ENCODE measurements at regions of chr2 and their contacts with region 1.

Region 1: GRCh38 chr2:37189452-37190153 is 1.1 kb upstream of the SULT6B1 start:
- DNase-seq: peak in 1 of 2 experiments; percentile 69
- H3K4me3 ChIP-seq: no peak overlapping the region
- H3K27ac ChIP-seq: no peak overlapping the region
- H3K4me1 ChIP-seq: peaks cover 14 to 25% (median 16%) of the 10 kb centered on the region in 4 experiments
- H3K27me3 ChIP-seq: no peaks in the 10 kb centered on the region
- CTCF ChIP-seq: peak in 1 of 3 experiments; percentile 13; a peak in 1 of 4 replicates
- EP300 ChIP-seq: no peak
- POLR2A ChIP-seq: no peak
- RAD21 ChIP-seq: no peak

Region 2: GRCh38 chr2:36650031-36650430 is 539.6 kb before region 1 on chr2:
- CTCF ChIA-PET with region 1: no interaction called
- POLR2A ChIA-PET with region 1: no interaction called
- DNase-seq: no peak
- H3K4me3 ChIP-seq: no peak overlapping the region
- H3K27ac ChIP-seq: no peak overlapping the region
- H3K4me1 ChIP-seq: no peaks in the 10 kb centered on the region
- H3K27me3 ChIP-seq: no peaks in the 10 kb centered on the region
- CTCF ChIP-seq: no peak
- EP300 ChIP-seq: no peak
- POLR2A ChIP-seq: no peak
- RAD21 ChIP-seq: no peak

Region 3: DNA sequence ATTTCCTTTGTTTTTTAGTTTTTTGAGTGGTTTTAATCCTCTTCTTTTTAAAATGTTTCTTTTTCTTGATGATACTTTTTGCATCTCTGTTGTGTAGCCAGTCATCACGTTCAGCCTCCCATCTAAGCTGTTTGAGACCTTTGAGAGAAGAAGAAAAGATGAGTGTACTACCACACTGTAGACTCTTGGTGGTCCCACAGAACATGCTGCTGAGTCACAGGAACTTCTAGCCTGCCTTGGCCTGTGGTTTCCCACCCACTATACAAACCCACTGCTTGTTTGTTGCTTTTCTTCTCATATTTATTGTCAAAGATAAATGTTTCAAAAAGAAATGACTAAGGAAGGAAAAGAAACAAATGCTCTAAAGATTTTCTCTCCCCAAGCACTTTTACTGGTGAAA is 12.2 kb after region 1 on chr2:
- CTCF ChIA-PET with region 1: interaction called, 12 read pairs
- POLR2A ChIA-PET with region 1: interaction called, 26 read pairs
- DNase-seq: no peak
- H3K4me3 ChIP-seq: no peak overlapping the region
- H3K27ac ChIP-seq: peak overlapping the region; percentile 52; the same call in 1 of the 2 replicates
- H3K4me1 ChIP-seq: peaks cover 0 to 17% (median 5%) of the 10 kb centered on the region in 4 experiments; a peak in 4 of 7 replicates
- H3K27me3 ChIP-seq: no peaks in the 10 kb centered on the region
- CTCF ChIP-seq: no peak
- EP300 ChIP-seq: no peak
- POLR2A ChIP-seq: no peak
- RAD21 ChIP-seq: no peak; a peak in 1 of 4 replicates

Region 4: DNA sequence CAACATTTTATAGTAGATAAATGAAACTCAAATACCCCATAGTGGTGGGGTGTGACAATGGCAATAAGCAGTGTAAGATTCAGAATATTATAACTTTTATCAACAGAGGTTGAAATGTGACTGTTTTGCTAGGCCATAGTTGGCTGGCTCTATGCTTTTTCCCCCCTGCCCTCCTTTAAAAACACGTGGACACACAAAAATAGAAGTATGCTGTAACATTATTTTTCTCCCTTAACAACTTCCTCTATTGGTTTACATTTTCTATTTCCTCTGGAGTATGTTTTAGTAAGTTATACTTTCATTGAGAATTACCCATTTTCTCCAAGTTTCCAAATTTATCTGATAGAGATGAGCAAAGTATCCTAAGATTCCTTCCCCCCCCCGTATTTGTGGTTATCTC is 72.9 kb after region 1 on chr2:
- CTCF ChIA-PET with region 1: interaction called, 12 read pairs
- POLR2A ChIA-PET with region 1: interaction called, 3 read pairs
- DNase-seq: no peak
- H3K4me3 ChIP-seq: no peak overlapping the region
- H3K27ac ChIP-seq: no peak overlapping the region
- H3K4me1 ChIP-seq: no peaks in the 10 kb centered on the region
- H3K27me3 ChIP-seq: no peaks in the 10 kb centered on the region
- CTCF ChIP-seq: no peak
- EP300 ChIP-seq: no peak
- POLR2A ChIP-seq: no peak
- RAD21 ChIP-seq: no peak